CD4-positive, alpha-beta memory T cell (primary cell): ENCODE measurements at regions of chr1 and their contacts with region 1.

Region 1: DNA sequence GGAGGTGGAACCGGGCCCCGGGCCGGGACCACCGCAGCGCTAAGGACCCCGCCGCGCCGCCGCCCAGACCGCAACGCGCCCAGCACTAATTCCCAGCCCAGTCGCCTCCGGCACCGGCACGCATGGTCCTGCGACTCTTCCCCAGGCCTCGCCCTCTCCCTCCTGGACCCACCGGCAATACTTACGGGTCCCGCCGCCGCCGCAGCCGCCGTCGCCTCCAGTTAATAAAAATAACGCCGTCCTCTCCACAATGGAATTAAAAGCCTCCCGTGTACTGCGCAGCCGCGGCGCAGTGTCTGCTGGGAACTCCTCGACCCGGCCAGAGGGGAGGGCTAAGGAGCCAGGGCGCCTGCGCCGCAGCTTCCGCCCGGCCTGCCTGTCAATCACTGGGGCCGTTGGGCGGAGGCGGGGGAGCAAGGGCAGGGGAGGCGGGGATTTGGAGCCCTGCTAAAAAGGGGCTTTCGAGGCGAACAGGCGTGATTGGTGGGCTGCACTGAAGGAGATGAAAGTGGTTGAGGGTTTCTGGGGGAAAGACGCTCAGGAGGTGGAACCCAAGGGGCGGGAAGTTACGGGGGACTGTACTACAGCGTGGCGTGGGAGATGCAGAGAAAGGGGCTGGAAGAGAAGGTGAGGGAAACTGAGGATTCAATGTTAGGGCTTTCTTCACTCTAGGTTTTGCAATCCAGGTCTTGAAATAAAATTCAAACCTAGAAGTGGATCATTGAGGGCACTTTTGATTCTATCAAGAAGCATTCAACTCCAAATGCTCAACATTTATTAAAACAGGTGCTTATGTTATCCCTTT is at the start of gene ZNF281:
- DNase-seq: peak; percentile 92 to 95 (median 94)
- H3K4me3 ChIP-seq: peak within 1 kb of the TSS; percentile 70 to 87
- H3K4me3 Mint-ChIP-seq: peak within 1 kb of the TSS; percentile 98 to 99 (median 99)
- H3K27ac ChIP-seq: peak within 1 kb of the TSS; percentile 88
- H3K27ac Mint-ChIP-seq: peak within 1 kb of the TSS; percentile 93 to 98 (median 96)
- H3K4me1 ChIP-seq: peaks cover 41% of the 10 kb centered on the region
- H3K4me1 Mint-ChIP-seq: peaks cover 39 to 57% (median 49%) of the 10 kb centered on the region in 4 donors
- H3K27me3 ChIP-seq: no peaks in the 10 kb centered on the region
- H3K27me3 Mint-ChIP-seq: no peaks in the 10 kb centered on the region
- total RNA-seq, gene ZNF281: 23.1 to 24.1 TPM

Region 2: DNA sequence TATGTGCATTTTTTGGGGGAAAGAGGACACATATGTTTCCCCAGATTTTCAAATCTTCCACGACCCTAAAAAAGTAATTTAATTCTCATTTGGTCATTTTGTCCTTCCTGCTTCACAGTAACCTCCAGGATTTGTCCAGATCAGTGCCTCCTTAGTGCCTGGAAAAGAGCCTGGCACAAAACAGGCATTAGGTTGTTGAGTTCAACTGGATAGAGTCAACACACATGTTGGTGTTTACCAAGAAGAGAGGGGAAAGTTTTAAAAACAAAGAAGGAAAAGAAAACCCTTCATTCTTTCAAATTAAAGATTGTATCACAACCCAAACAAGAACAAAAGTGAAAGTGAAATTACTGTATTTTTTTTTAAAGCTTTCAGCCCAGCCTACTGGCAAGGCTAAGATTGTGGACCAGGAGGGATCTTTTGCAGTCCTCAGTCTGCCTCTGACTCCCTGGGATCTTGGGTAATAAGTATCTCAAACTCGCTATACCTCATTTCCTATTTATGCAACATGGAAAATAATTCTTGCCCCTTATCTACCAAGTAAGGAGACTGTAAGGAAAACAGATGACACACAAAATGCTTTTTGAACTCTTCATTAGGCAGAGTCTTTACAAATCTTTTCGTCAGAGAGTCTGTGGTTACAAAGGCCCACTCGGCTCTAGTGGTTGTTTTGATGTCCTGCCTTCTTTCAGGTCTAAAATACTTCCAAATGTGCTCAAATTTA is 58.0 kb before region 1 on chr1:
- CTCF ChIA-PET with region 1: no interaction called
- POLR2A ChIA-PET with region 1: no interaction called
- intact Hi-C with region 1: loop called (anchors 1 kb)
- DNase-seq: peak; percentile 38 to 54 (median 40)
- H3K4me3 ChIP-seq: peak overlapping the region in 1 of 2 donors; percentile 42
- H3K4me3 Mint-ChIP-seq: peak overlapping the region; percentile 28 to 88 (median 76)
- H3K27ac ChIP-seq: peak overlapping the region; percentile 17
- H3K27ac Mint-ChIP-seq: peak overlapping the region; percentile 19 to 94 (median 84)
- H3K4me1 ChIP-seq: peaks cover 23% of the 10 kb centered on the region
- H3K4me1 Mint-ChIP-seq: peaks cover 19 to 32% (median 25%) of the 10 kb centered on the region in 4 donors
- H3K27me3 ChIP-seq: no peaks in the 10 kb centered on the region
- H3K27me3 Mint-ChIP-seq: no peaks in the 10 kb centered on the region

Region 3: GRCh38 chr1:200669314-200670241 is 259.6 kb after region 1 on chr1 and contains the start of gene DDX59:
- CTCF ChIA-PET with region 1: no interaction called
- POLR2A ChIA-PET with region 1: no interaction called
- intact Hi-C with region 1: loop called (anchors 1 kb)
- DNase-seq: peak; percentile 85 to 92 (median 87)
- H3K4me3 ChIP-seq: peak within 1 kb of the TSS; percentile 57 to 95
- H3K4me3 Mint-ChIP-seq: peak within 1 kb of the TSS; percentile 95 to 99 (median 98)
- H3K27ac ChIP-seq: peak within 1 kb of the TSS; percentile 98
- H3K27ac Mint-ChIP-seq: peak within 1 kb of the TSS; percentile 95 to 99 (median 98)
- H3K4me1 ChIP-seq: peaks cover 39% of the 10 kb centered on the region
- H3K4me1 Mint-ChIP-seq: peaks cover 29 to 57% (median 41%) of the 10 kb centered on the region in 4 donors
- H3K27me3 ChIP-seq: no peaks in the 10 kb centered on the region
- H3K27me3 Mint-ChIP-seq: no peaks in the 10 kb centered on the region
- total RNA-seq, gene DDX59: 37.0 to 37.5 TPM